MCF 10A (cell line): ENCODE measurements at regions of chr7 and their contacts with region 1.

Region 1: GRCh38 chr7:148962823-148963582 is 65.3 kb downstream of the PDIA4 start:
- DNase-seq: peak; percentile 72
- H3K4me3 Mint-ChIP-seq: peak overlapping the region; percentile 77
- H3K27ac Mint-ChIP-seq: peak overlapping the region; percentile 79
- H3K4me1 Mint-ChIP-seq: peaks cover 11% of the 10 kb centered on the region
- H3K27me3 Mint-ChIP-seq: no peaks in the 10 kb centered on the region
- CTCF ChIP-seq: peak; percentile 87

Region 2: DNA sequence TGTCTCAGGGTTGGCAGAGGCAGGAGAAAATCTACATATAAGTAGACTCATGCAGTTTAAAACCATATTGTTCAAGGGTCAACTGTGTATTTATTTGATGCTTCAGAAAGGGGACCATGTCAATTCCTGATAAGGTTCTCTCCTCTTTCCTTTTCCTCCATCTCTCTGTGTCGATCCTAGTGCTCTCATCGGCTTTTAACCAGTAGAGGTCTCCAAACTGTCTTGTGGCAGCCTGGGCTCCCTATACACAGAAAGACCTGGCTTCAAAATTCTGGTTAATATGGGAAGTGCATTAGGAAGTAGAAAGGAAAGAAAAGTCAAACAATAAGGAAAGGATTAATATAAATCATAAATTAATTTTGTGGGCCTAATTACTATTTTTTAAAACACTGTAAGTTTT is 676.9 kb before region 1 on chr7:
- CTCF ChIA-PET with region 1: interaction called, 6 read pairs
- POLR2A ChIA-PET with region 1: no interaction called
- intact Hi-C with region 1: loop called (anchors 5 kb)
- DNase-seq: peak; percentile 44
- H3K4me3 Mint-ChIP-seq: no peak overlapping the region
- H3K27ac Mint-ChIP-seq: no peak overlapping the region
- H3K4me1 Mint-ChIP-seq: no peaks in the 10 kb centered on the region
- H3K27me3 Mint-ChIP-seq: peaks cover 22% of the 10 kb centered on the region
- CTCF ChIP-seq: peak; percentile 47

Region 3: GRCh38 chr7:148575640-148576411 is 387.2 kb before region 1 on chr7:
- CTCF ChIA-PET with region 1: interaction called, 47 read pairs
- POLR2A ChIA-PET with region 1: interaction called, 6 read pairs
- intact Hi-C with region 1: loop called (anchors 1 kb)
- DNase-seq: peak; percentile 76
- H3K4me3 Mint-ChIP-seq: no peak overlapping the region
- H3K27ac Mint-ChIP-seq: no peak overlapping the region
- H3K4me1 Mint-ChIP-seq: no peaks in the 10 kb centered on the region
- H3K27me3 Mint-ChIP-seq: no peaks in the 10 kb centered on the region
- CTCF ChIP-seq: peak; percentile 87

Region 4: GRCh38 chr7:148773334-148773733 is 189.7 kb before region 1 on chr7:
- CTCF ChIA-PET with region 1: interaction called, 9 read pairs
- POLR2A ChIA-PET with region 1: interaction called, 3 read pairs
- intact Hi-C with region 1: loop called (anchors 5 kb)
- DNase-seq: no peak
- H3K4me3 Mint-ChIP-seq: no peak overlapping the region
- H3K27ac Mint-ChIP-seq: peak overlapping the region; percentile 62
- H3K4me1 Mint-ChIP-seq: peaks cover 16% of the 10 kb centered on the region
- H3K27me3 Mint-ChIP-seq: no peaks in the 10 kb centered on the region
- CTCF ChIP-seq: no peak

Region 5: DNA sequence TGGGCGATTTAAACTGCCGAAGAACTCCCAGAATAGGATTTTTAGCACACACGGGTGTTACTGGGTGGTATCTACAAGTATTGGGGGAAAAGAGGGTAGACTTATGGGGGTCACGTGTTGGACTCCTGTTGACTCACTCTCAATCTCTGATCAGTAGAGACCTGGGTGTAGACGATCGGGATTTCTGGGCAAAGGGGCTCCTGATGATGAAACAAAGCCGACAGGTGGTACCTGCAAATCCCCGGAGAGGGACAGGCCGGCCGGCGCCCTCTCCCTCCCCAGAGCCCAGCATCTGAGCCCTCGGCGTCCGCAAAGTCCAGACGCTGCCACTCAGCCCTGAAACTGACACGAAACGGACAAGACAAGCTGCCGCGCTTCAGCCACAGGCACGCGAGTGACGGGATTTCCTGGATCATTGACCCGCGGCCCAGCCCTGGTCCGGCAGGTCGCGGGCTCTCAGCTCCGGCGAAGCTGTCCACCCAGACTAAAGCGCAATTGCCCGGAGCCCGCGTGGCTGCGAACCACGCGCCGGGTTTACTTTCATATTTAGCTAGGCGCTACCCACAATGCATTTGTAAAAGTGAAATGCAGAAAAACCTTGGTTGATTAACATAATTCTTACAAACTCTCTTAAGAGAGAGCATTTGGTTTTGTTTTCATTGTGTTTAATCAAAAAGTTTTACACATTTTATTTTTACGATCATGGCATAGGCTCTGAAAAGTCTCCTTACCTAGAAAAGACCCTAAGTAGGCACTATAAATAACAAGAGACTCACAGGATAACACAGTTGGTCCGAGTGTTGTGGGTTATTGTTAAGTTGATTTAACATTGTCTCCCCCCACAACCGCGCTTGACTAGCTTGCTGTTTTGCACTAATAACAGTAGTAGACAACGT is 22.1 kb before region 1 on chr7:
- CTCF ChIA-PET with region 1: interaction called, 18 read pairs
- POLR2A ChIA-PET with region 1: interaction called, 12 read pairs
- intact Hi-C with region 1: loop called (anchors 2 kb)
- DNase-seq: peak; percentile 87
- H3K4me3 Mint-ChIP-seq: peak overlapping the region; percentile 93
- H3K27ac Mint-ChIP-seq: peak overlapping the region; percentile 98
- H3K4me1 Mint-ChIP-seq: peaks cover 6% of the 10 kb centered on the region
- H3K27me3 Mint-ChIP-seq: no peaks in the 10 kb centered on the region
- CTCF ChIP-seq: no peak

Region 6: GRCh38 chr7:149005241-149006050 is 42.4 kb after region 1 on chr7:
- CTCF ChIA-PET with region 1: no interaction called
- POLR2A ChIA-PET with region 1: no interaction called
- intact Hi-C with region 1: no loop called
- DNase-seq: peak; percentile 65
- H3K4me3 Mint-ChIP-seq: no peak overlapping the region
- H3K27ac Mint-ChIP-seq: no peak overlapping the region
- H3K4me1 Mint-ChIP-seq: no peaks in the 10 kb centered on the region
- H3K27me3 Mint-ChIP-seq: no peaks in the 10 kb centered on the region
- CTCF ChIP-seq: peak; percentile 53

Region 7: DNA sequence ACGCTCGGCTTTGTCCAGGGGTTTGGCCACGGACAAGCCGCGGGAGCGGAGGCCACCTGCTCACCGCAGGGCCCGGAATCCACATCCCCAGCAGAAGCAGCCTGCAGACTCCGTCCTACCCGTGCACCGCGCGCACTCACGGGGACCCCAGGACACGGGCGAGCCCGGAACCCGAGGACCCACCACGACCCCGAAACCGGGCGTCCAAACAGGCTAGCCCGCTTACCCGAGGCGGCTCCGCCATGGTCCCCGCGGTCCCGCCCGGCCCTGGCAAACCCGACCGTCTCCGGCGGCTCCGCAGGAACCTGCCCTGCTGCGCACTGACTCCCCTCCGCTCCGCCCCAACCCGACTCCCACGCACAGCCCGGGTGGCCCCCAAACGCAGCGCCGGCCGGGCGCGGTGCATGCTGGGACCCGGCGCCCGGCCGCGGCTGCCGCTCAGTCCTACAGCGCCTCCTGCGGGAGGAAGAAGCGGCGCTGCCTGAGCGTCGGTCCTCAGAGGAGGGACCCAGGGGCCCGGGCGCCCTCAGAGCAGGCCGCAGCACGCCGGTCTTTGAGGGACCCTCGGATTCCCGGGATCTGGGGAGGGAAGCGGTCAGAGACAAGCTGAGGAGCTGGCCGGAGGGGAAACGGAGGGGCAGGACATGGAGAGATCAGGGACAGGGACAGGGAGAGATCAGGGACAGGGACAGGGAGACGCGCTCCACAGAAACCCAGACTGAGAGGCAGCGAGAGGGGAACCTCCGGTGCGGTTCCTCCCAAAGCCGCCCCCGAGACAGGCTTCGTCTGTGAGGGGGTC is 127.6 kb after region 1 on chr7 and contains the start of gene ZNF786:
- CTCF ChIA-PET with region 1: no interaction called
- POLR2A ChIA-PET with region 1: no interaction called
- intact Hi-C with region 1: loop called (anchors 1 kb)
- DNase-seq: peak; percentile 90
- H3K4me3 Mint-ChIP-seq: peak within 1 kb of the TSS; percentile 98
- H3K27ac Mint-ChIP-seq: peak within 1 kb of the TSS; percentile 99
- H3K4me1 Mint-ChIP-seq: peaks cover 6% of the 10 kb centered on the region
- H3K27me3 Mint-ChIP-seq: no peaks in the 10 kb centered on the region
- CTCF ChIP-seq: peak; percentile 87
- total RNA-seq, gene ZNF786: 5.6 and 6.7 TPM in 2 replicates